Esophagus squamous epithelium (tissue), 5 donors: ENCODE measurements at regions of chr18 and their contacts with region 1.

Region 1: GRCh38 chr18:58043491-58044379 is at the start of gene NEDD4L:
- DNase-seq: peak; percentile 32
- H3K4me3 ChIP-seq: peak within 1 kb of the TSS; percentile 66 to 92 (median 86)
- H3K27ac ChIP-seq: peak within 1 kb of the TSS; percentile 86 to 93 (median 90)
- H3K4me1 ChIP-seq: peaks cover 0 to 39% (median 14%) of the 10 kb centered on the region in 3 donors
- H3K27me3 ChIP-seq: no peaks in the 10 kb centered on the region
- CTCF ChIP-seq: peak; percentile 77 to 92 (median 84)
- POLR2A ChIP-seq: peak in 1 of 4 donors; percentile 24
- total RNA-seq, gene NEDD4L: 17.0 to 27.6 (median 21.9) TPM

Region 2: DNA sequence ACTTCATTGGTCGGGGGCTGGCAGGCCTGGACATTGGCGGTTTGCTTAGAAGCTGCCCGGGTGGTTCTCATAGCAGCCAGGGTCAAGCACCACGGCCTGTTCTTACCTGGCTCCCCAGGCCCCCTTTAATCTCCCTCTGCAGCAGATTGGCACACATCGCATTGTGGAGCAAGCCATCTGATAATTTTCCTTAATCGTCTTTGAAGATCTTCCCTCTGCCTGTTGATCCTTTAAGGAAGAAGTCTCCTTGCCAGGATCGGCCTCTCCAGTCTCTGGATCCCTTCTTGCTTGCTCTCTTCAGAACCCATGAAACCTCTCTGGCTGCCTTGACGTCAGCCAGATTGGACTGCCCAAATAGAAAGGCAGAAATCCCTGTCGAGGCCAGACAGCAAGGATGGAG is 76.1 kb after region 1 on chr18:
- intact Hi-C with region 1: loop called (anchors 2 kb)
- DNase-seq: no peak
- H3K4me3 ChIP-seq: no peak overlapping the region
- H3K27ac ChIP-seq: no peak overlapping the region
- H3K4me1 ChIP-seq: peaks cover 0 to 15% (median 5%) of the 10 kb centered on the region in 3 donors
- H3K27me3 ChIP-seq: no peaks in the 10 kb centered on the region
- CTCF ChIP-seq: no peak
- POLR2A ChIP-seq: no peak